OCI-LY7 (cell line): ENCODE measurements at regions of chr20 and their contacts with region 1.

Region 1: DNA sequence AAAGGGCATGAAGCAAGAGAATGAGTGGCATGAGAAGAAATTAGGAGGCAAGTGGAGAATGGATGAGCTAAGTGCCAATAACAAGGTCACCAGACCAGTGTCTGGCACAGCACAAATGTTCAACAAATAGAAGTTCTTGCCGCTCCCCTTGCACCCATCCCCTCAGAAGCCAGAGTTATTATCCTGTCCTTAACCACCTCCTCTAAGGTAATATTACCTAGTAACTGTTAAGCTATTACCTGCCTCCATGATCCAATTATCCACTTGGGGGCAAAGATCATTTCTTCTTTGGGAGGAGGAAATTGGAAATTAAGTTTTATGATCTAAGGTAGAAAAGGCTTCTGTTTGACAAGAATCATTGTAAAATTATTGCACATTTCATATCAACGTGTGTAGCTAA is 133.8 kb downstream of the FOXA2 start:
- DNase-seq: no peak
- H3K4me3 ChIP-seq: no peak overlapping the region
- H3K27ac ChIP-seq: no peak overlapping the region
- H3K4me1 ChIP-seq: no peaks in the 10 kb centered on the region
- CTCF ChIP-seq: no peak

Region 2: DNA sequence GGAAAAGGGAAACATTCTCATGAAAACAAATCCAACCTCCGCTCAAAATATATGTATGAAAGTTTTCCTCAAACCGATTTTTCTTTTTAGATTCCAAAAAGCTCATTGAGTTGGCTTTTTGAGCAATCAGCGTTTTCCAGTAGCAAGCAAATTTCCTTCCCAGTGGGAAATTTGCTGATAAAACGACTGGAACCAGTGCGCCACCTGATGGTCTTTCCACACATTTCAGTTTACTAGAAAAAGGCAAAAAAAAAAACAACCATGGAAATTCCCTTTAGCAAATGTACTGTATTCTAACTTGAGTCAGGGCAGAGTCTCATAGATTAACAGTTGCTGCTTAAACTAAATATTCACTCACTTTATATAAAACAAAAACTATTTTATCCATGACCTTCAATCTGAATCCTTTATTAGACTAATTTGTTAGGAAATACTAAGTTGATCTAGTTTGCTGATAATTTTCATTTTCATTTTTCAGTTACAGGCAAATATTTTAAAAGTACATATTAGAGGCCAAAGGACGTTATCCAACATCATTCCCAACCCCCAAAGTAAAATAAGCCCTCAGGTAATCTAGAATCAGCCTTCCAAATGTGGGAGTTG is 137.7 kb before region 1 on chr20:
- CTCF ChIA-PET with region 1: no interaction called
- POLR2A ChIA-PET with region 1: interaction called, 11 read pairs
- intact Hi-C with region 1: no loop called
- DNase-seq: peak; percentile 7
- H3K4me3 ChIP-seq: no peak overlapping the region
- H3K27ac ChIP-seq: no peak overlapping the region
- H3K4me1 ChIP-seq: no peaks in the 10 kb centered on the region
- CTCF ChIP-seq: peak; percentile 82

Region 3: GRCh38 chr20:22663528-22664025 is 213.0 kb after region 1 on chr20:
- CTCF ChIA-PET with region 1: no interaction called
- POLR2A ChIA-PET with region 1: no interaction called
- intact Hi-C with region 1: no loop called
- DNase-seq: no peak
- H3K4me3 ChIP-seq: no peak overlapping the region
- H3K27ac ChIP-seq: no peak overlapping the region
- H3K4me1 ChIP-seq: no peaks in the 10 kb centered on the region
- CTCF ChIP-seq: no peak